ENCODE measurements at regions of chr12 and their contacts with region 1.

Region 1: GRCh38 chr12:64890873-64891468 is 66.5 kb downstream of the TBC1D30 start:
- DNase-seq: no peak
- H3K4me3 ChIP-seq: no peak overlapping the region
- H3K27ac ChIP-seq: no peak overlapping the region
- H3K27me3 ChIP-seq: peaks cover 0 to 13% (median 0%) of the 10 kb centered on the region in 45 donors
- CTCF ChIP-seq: peak; percentile 71 to 98 (median 91)

Region 2: DNA sequence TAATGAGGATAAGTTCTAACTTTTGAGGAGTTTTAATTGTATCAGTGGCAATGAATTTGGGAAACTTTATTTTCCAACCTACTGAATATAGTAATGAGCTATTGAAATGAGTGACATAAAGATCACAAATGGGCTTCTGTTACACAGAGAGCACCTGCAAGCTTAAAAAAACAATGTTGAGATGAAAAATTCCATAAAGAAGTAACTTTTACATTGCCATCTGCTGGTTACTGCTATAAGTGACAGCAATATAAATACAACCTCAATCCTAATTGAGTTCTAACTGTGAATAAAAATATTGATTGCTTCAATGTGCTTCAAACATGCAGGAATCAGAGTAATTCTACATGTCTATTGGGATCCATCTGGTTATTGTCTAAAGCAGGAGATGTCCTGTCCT is 216.0 kb after region 1 on chr12:
- intact Hi-C with region 1: loop called in 1 of 2 experiments (anchors 5 kb)
- DNase-seq: no peak
- H3K4me3 ChIP-seq: no peak overlapping the region
- H3K27ac ChIP-seq: no peak overlapping the region
- H3K27me3 ChIP-seq: peaks cover 0 to 18% (median 0%) of the 10 kb centered on the region in 45 donors
- CTCF ChIP-seq: peak in 51 of 56 donors; percentile 14 to 61 (median 39)

Region 3: GRCh38 chr12:65121049-65121955 is 230.3 kb after region 1 on chr12 and contains the start of gene WIF1:
- intact Hi-C with region 1: loop called (anchors 2 to 5 kb)
- DNase-seq: peak in 6 of 10 donors; percentile 20 to 52 (median 43)
- H3K4me3 ChIP-seq: peak within 1 kb of the TSS; percentile 12 to 66 (median 45)
- H3K27ac ChIP-seq: no peak within 1 kb of the TSS
- H3K27me3 ChIP-seq: peaks cover 0 to 99% (median 66%) of the 10 kb centered on the region in 45 donors
- CTCF ChIP-seq: peak in 38 of 56 donors; percentile 13 to 58 (median 26)
- total RNA-seq, gene WIF1: 1.5 to 77.3 (median 22.0) TPM

Region 4: GRCh38 chr12:66107451-66107915 is 1216.5 kb after region 1 on chr12:
- intact Hi-C with region 1: loop called in 1 of 2 experiments (anchors 10 kb)
- DNase-seq: peak in 3 of 10 donors; percentile 10 to 27 (median 13)
- H3K4me3 ChIP-seq: no peak overlapping the region
- H3K27ac ChIP-seq: no peak overlapping the region
- H3K27me3 ChIP-seq: peaks cover 0 to 23% (median 0%) of the 10 kb centered on the region in 45 donors
- CTCF ChIP-seq: peak; percentile 50 to 92 (median 81)